HEK293 (cell line): ENCODE measurements at regions of chr15 and their contacts with region 1.

Region 1: DNA sequence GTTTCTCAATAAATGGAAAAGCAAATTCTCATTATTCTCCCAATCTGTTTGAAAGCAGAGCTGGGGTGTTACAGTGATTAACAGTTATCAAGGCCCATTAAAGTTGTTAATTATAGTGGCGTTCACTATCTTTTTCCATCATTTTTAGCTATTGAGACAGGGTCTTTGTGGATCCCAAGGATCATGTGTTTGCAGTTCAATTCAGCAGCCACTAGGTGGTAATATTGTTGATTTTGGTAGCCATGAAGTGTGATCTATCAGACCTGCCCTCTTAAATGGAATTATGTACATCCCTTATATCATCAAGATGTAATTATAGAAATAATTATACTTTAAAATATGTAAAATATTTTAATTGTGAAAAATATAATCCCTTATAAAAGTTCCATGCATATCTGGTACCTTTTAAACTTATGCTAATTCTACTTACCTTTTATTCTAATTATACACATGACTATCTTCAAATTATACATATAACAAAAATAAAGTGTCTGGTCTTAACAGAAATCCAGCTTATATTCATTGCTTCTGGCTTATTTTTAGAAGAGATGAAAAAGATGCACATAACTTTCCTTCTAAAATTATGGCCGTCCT is 126.4 kb downstream of the GREM1 start:
- H3K4me3 ChIP-seq: no peak overlapping the region
- H3K27ac ChIP-seq: no peak overlapping the region
- H3K4me1 ChIP-seq: peaks cover 3% of the 10 kb centered on the region; the same call in 1 of the 2 replicates
- CTCF ChIP-seq: no peak

Region 2: GRCh38 chr15:32663671-32664070 is 180.5 kb before region 1 on chr15:
- CTCF ChIA-PET with region 1: interaction called, 21 read pairs
- POLR2A ChIA-PET with region 1: no interaction called
- H3K4me3 ChIP-seq: no peak overlapping the region
- H3K27ac ChIP-seq: no peak overlapping the region
- H3K4me1 ChIP-seq: no peaks in the 10 kb centered on the region
- CTCF ChIP-seq: no peak

Region 3: GRCh38 chr15:32834156-32834555 is 10.1 kb before region 1 on chr15:
- CTCF ChIA-PET with region 1: interaction called, 14 read pairs
- POLR2A ChIA-PET with region 1: no interaction called
- H3K4me3 ChIP-seq: no peak overlapping the region
- H3K27ac ChIP-seq: no peak overlapping the region
- H3K4me1 ChIP-seq: peaks cover 8% of the 10 kb centered on the region
- CTCF ChIP-seq: no peak

Region 4: GRCh38 chr15:32936283-32936918 is 92.2 kb after region 1 on chr15:
- CTCF ChIA-PET with region 1: interaction called, 25 read pairs
- POLR2A ChIA-PET with region 1: no interaction called
- H3K4me3 ChIP-seq: no peak overlapping the region
- H3K27ac ChIP-seq: no peak overlapping the region
- H3K4me1 ChIP-seq: no peaks in the 10 kb centered on the region
- CTCF ChIP-seq: no peak

Region 5: GRCh38 chr15:32956006-32956405 is 111.8 kb after region 1 on chr15:
- CTCF ChIA-PET with region 1: interaction called, 24 read pairs
- POLR2A ChIA-PET with region 1: no interaction called
- H3K4me3 ChIP-seq: no peak overlapping the region
- H3K27ac ChIP-seq: no peak overlapping the region
- H3K4me1 ChIP-seq: no peaks in the 10 kb centered on the region
- CTCF ChIP-seq: no peak

Region 6: DNA sequence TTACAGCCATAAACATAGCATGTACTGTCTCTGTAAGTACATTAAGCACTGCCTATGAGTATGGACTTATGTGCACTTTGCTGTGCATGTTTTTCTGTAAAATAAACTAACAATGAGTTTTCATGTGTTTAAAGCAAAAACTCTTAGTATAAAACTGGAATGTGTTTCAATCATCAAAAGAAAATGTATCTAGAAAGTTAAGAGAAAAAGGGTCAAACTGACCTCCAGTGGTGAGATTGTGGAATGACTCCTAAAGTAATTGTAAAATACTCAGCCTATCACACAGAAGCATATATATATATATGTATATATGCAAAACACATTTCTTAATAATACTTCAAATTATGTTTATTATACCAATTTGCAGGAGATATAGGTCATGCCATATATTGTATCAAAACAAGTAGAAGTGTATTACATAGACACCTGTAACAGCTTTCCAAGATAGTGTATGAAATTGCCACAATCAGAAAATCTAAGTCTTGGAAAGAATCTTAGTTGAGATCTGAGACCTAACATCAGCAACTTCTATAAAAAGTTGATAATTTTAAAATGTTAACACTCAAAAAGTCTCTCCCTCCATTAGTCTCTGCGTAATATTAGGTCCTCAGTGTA is 150.7 kb after region 1 on chr15:
- CTCF ChIA-PET with region 1: interaction called, 17 read pairs
- POLR2A ChIA-PET with region 1: no interaction called
- H3K4me3 ChIP-seq: no peak overlapping the region
- H3K27ac ChIP-seq: no peak overlapping the region
- H3K4me1 ChIP-seq: peaks cover 5% of the 10 kb centered on the region
- CTCF ChIP-seq: no peak

Region 7: GRCh38 chr15:33031324-33031821 is 187.2 kb after region 1 on chr15:
- CTCF ChIA-PET with region 1: no interaction called
- POLR2A ChIA-PET with region 1: no interaction called
- H3K4me3 ChIP-seq: no peak overlapping the region
- H3K27ac ChIP-seq: no peak overlapping the region
- H3K4me1 ChIP-seq: peaks cover 4% of the 10 kb centered on the region; the same call in 1 of the 2 replicates
- CTCF ChIP-seq: no peak